Dorsolateral prefrontal cortex (tissue), 120 donors: ENCODE measurements at regions of chr20 and their contacts with region 1.

Region 1: DNA sequence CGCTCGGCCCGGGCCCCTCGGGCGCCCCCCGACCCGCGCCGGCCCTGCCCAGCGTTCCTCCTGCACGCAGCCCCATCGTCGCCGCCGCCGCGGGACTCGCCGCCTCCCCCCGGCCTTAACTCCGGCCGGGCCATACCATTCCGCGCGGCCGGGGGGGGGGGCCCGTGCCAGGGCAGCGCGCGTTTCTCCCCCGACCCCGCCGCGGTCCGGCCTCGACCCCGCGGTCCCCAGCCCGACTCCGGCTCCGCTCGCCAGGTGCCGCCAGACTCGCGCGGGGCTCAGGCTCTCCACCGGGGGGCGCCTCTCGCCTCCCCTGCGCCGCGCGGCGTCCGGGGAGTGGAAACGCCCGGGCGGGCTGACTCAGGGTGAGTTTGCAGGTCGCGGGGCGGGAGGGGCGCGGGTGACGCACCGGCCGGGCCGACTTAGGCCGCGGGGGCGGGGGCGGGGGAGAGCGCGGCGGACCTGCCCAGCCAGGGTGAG is at the start of gene SRXN1:
- DNase-seq: peak; percentile 52 to 91 (median 74)
- H3K4me3 ChIP-seq: peak within 1 kb of the TSS; percentile 51 to 89 (median 73)
- H3K27ac ChIP-seq: peak within 1 kb of the TSS in 56 of 59 donors; percentile 18 to 91 (median 80)
- H3K27me3 ChIP-seq: no peaks in the 10 kb centered on the region
- CTCF ChIP-seq: peak in 54 of 56 donors; percentile 15 to 84 (median 61)
- total RNA-seq, gene SRXN1: 14.4 to 47.4 (median 30.2) TPM

Region 2: DNA sequence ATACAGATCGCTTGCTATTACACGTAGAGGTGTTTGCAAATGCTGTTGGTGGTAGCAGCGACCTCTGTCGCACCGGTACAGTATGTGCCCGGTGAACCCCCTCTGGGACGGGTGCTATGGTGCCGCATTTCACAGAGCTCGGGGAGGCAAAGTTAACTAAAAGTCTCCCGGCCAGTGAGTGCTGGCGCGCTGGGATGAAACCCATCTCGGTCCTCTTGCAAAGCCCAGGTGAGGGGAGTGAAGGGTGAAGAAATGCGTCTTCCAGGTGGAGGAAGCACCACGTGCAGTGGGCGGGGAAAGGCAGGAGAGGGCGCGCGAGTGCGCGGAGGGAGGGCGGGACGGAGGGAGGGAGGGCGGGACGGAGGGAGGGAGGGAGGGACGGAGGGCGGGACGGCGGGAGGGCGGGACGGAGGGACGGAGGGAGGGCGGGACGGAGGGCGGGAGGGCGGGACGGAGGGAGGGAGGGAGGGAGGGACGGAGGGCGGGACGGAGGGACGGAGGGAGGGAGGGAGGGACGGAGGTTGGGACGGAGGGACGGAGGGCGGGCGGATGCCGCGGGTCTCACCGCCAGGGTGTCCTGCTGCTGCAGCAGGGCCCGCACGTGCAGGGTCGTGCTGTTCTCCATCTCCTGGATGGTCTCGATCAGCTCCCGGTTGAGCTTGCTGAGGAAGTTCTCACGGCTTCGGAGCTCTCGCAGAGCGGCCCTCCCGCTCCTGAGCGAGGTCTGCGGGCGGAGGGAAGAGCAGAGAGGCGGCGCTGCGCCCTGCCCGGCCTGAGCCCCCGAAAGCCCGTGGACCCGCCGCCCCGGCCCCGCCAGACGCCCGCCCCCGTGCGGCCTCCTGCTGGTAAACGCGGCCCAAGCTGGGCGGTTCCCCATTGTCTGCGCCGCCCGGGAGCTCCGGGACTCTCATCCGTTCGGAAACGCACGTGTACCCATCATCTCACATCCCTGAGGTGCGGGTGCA is 374.3 kb before region 1 on chr20:
- intact Hi-C with region 1: no loop called
- DNase-seq: peak in 1 of 10 donors; percentile 45
- H3K4me3 ChIP-seq: peak overlapping the region in 49 of 59 donors; percentile 7 to 59 (median 42)
- H3K27ac ChIP-seq: no peak overlapping the region
- H3K27me3 ChIP-seq: no peaks in the 10 kb centered on the region
- CTCF ChIP-seq: peak in 15 of 56 donors; percentile 7 to 35 (median 19)

Region 3: DNA sequence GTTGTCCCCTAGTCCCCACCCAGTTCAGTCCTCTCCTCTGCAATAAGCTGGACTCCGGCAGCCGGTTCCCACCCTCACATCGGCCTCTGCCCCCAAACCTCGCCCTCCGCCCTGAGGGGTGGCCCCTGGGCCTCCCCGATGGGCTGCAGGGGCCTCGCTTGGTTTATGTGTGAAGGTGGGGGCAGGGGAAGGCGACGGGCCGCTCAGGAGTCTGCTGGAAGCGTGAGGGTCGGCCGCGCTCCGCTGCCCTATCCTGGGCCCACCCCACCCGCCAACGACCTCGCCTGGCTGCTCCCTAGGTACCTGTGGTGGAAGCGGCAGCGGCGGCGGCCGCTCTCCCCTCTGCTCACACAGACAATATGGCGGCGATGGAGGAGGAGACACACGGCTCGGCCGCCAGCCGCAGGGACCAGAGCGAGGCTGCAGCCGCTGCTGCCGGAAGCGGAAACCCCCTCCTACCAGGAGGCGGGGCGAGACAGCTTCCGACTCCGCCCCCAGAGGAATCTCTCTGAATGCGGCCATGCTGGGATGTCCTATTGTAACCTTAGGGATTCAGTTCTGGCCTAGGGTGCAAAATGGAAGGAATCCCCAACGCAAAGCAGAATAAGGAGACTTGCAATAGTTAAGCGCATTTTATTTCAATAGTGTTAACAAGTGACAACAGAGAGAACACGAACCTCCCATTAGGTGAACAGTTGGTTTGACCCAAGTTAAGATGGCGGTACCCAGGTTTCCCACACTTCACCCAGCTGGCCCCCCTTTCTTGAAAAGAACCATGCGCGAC is 109.6 kb before region 1 on chr20 and contains the start of gene CSNK2A1:
- intact Hi-C with region 1: loop called in 1 of 2 experiments (anchors 5 kb)
- DNase-seq: peak; percentile 90 to 96 (median 94)
- H3K4me3 ChIP-seq: peak within 1 kb of the TSS; percentile 72 to 100 (median 95)
- H3K27ac ChIP-seq: peak within 1 kb of the TSS; percentile 80 to 100 (median 97)
- H3K27me3 ChIP-seq: peaks cover 0 to 5% (median 0%) of the 10 kb centered on the region in 45 donors
- CTCF ChIP-seq: peak in 23 of 56 donors; percentile 7 to 59 (median 37)
- total RNA-seq, gene CSNK2A1: 89.8 to 145 (median 121) TPM

Region 4: GRCh38 chr20:672962-673602 is 19.9 kb after region 1 on chr20:
- intact Hi-C with region 1: loop called in 1 of 2 experiments (anchors 2 kb)
- DNase-seq: no peak
- H3K4me3 ChIP-seq: no peak overlapping the region
- H3K27ac ChIP-seq: peak overlapping the region in 21 of 59 donors; percentile 2 to 76 (median 37)
- H3K27me3 ChIP-seq: peaks cover 0 to 27% (median 2%) of the 10 kb centered on the region in 45 donors
- CTCF ChIP-seq: peak in 6 of 56 donors; percentile 8 to 36 (median 11)

Region 5: GRCh38 chr20:733861-734260 is 80.7 kb after region 1 on chr20:
- intact Hi-C with region 1: loop called (anchors 5 to 10 kb)
- DNase-seq: no peak
- H3K4me3 ChIP-seq: no peak overlapping the region
- H3K27ac ChIP-seq: no peak overlapping the region
- H3K27me3 ChIP-seq: peaks cover 0 to 6% (median 0%) of the 10 kb centered on the region in 45 donors
- CTCF ChIP-seq: no peak

Region 6: DNA sequence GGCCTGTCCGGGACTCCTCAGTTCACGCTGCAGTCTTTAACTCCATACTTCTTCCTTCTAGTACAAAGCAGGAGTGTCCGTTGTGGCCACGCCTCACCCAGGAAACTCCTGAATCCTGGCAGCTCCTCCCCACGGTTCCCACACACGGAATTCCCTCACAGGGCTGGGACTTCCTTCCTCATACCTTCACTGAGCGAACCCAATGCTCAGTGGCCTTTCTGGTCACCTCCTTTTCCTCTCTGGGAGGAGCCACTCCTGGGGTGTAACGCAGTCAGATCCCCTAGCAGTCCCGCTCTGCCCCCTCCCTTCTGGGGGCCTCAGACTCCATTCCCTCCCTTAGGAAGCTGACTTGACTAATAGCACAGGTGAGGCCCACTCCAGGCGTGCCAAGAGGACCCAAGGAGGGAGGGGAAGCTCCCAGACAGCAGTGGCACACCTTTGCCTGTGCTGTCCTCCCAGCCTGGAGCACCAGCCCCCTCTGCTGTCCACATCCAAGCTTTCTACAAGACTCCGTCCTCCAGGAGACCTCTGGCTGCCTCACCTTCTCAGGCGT is 115.4 kb after region 1 on chr20 and contains the start of gene SLC52A3:
- intact Hi-C with region 1: no loop called
- DNase-seq: no peak
- H3K4me3 ChIP-seq: peak within 1 kb of the TSS in 42 of 59 donors; percentile 1 to 57 (median 30)
- H3K27ac ChIP-seq: peak within 1 kb of the TSS in 19 of 59 donors; percentile 5 to 67 (median 29)
- H3K27me3 ChIP-seq: no peaks in the 10 kb centered on the region
- CTCF ChIP-seq: peak in 31 of 56 donors; percentile 11 to 47 (median 26)
- total RNA-seq, gene SLC52A3: 0.66 to 16.3 (median 6.5) TPM